Activated CD8-positive, alpha-beta T cell treated with anti-CD3 and anti-CD28 coated beads, Interleukin-2, amount 10 ng/mL, durations not matched to agents 7 days and 5 days (primary cell): ENCODE measurements at regions of chr4 and their contacts with region 1.

Region 1: GRCh38 chr4:6885951-6886557 is 23.6 kb upstream of the TBC1D14 start:
- DNase-seq: no peak
- ATAC-seq: peak; percentile 50
- H3K4me3 Mint-ChIP-seq: no peak overlapping the region
- H3K27ac Mint-ChIP-seq: no peak overlapping the region
- H3K4me1 Mint-ChIP-seq: peaks cover 4% of the 10 kb centered on the region
- H3K27me3 Mint-ChIP-seq: no peaks in the 10 kb centered on the region

Region 2: GRCh38 chr4:6716018-6716911 is 169.8 kb before region 1 on chr4 and contains the start of gene BLOC1S4:
- CTCF ChIA-PET with region 1: interaction called, 33 read pairs
- POLR2A ChIA-PET with region 1: no interaction called
- DNase-seq: peak; percentile 92
- ATAC-seq: peak; percentile 83
- H3K4me3 Mint-ChIP-seq: peak within 1 kb of the TSS; percentile 91
- H3K27ac Mint-ChIP-seq: peak within 1 kb of the TSS; percentile 97
- H3K4me1 Mint-ChIP-seq: peaks cover 35% of the 10 kb centered on the region
- H3K27me3 Mint-ChIP-seq: no peaks in the 10 kb centered on the region
- total RNA-seq, gene BLOC1S4: 19.6 to 21.5 TPM

Region 3: DNA sequence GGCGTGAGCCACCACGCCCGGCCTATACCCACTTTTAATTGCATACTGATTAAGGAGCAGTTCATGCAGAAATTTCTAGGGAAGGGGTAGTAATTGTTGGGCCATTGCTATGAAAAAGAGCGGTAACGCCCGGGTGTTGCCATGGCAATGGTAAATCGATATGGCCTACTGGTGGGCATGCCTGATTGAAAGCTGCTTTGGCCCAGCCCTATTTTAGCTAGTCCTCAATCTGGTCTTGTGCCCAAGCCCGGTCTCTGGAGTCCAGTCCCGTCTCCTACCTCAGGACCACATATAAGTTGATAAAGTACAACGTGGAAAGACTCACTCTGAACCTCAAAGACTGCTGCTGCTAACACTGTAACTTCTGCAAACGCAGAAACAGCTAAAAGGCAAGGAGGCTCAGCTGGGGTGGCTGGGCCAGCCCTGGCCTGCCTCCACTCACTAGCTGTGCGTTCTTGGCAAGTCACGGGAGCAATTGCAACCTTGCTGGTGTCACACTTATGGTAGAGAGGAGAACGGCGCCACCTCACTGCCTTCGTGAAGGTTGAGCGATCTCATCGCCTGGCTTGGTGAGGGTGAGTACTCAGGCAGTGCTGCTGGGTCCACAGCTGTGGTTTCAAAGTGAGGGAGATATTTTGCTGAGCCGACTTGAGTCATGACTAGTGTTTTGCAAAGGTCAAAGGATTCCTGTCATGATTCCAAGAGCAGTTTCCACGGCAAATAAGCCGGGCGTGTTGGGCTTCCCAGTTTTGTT is 238.8 kb after region 1 on chr4:
- CTCF ChIA-PET with region 1: no interaction called
- POLR2A ChIA-PET with region 1: no interaction called
- DNase-seq: no peak
- ATAC-seq: no peak
- H3K4me3 Mint-ChIP-seq: no peak overlapping the region
- H3K27ac Mint-ChIP-seq: no peak overlapping the region
- H3K4me1 Mint-ChIP-seq: no peaks in the 10 kb centered on the region
- H3K27me3 Mint-ChIP-seq: peaks cover 4% of the 10 kb centered on the region